ENCODE measurements at regions of chr14 and their contacts with region 1.

Region 1: DNA sequence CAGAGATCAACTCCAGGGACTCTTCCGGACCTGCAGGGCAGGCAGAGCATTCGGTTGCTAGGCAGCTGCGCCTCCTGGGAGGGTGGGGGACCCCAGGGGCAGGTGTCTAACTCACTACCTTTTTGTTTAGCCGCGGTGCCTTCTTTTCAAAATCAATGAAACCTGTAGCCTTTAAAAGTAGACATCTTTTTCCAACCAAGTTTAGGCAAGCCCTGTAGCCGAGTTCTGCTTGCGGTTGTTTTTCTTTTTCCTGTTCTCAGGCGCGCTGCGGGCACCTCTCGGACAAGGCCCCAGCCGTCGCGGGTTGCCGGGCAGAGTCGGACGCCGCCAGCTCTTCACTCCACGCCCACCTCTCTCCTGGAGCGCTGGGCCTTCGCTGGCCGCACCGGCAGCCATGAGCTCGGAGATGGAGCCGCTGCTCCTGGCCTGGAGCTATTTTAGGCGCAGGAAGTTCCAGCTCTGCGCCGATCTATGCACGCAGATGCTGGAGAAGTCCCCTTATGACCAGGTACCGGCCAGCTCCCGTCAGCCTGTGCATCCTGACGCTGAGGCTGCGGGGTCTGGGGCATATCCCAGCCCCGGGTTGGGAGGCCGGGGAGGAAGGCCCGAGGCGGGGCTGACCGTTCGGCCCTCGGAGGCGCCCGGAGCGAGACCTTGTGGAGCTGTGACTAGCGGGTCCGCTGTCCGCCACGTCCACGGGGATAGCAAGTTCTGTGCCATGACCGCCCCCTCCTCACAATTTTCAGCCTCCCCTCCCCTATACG is at the start of gene TTC8:
- DNase-seq: peak; percentile 79 to 91
- ATAC-seq: peak; percentile 96 to 98 (median 96)
- H3K4me3 ChIP-seq: peak within 1 kb of the TSS; percentile 67
- H3K4me3 Mint-ChIP-seq: peak within 1 kb of the TSS; percentile 87
- H3K27ac ChIP-seq: peak within 1 kb of the TSS; percentile 85
- H3K27ac Mint-ChIP-seq: peak within 1 kb of the TSS; percentile 92 to 94
- H3K4me1 ChIP-seq: peaks cover 8% of the 10 kb centered on the region
- H3K4me1 Mint-ChIP-seq: peaks cover 0 to 13% of the 10 kb centered on the region in 2 donors
- H3K27me3 ChIP-seq: no peaks in the 10 kb centered on the region
- H3K27me3 Mint-ChIP-seq: peaks cover 16 to 39% of the 10 kb centered on the region in 2 donors
- CTCF ChIP-seq: no peak
- total RNA-seq, gene TTC8: 1.3 to 2.4 (median 1.9) TPM

Region 2: DNA sequence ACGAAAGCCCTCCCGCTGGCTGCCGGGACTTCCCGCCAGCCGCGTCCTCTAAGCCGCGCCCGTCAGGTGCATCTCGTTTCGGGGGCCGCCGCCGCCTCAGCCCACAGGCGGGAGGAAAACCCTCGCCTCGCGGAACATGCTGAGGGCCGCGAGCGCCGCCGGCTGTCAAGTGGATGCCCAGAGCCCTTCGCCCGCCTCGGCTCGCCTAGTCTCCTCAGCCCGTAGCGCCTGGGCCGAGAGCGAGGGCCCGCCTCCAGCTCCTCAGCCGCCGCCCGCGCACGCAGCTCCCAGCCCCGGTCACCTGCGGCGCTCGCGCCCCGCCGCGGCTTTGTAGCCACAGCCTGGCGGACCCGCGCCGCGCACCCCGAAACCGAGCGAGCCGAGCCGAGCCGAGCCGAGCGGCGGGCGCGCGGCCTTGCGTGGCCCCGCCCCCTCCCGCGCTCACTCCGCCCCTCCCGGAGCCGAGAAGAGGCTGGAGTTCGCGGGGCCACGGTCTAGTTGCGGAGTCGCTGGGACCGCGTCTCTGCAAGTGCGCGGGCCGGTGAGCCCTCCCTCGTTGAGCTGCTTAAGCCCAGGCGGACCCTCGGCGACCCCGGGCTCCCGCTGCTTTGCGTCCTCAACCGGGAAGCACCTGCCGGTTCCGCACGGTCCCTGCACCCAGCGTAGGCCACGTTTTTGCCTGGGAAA is 31.8 kb before region 1 on chr14 and contains the start of gene EML5:
- intact Hi-C with region 1: loop called (anchors 1 kb)
- DNase-seq: peak; percentile 74 to 90
- ATAC-seq: peak; percentile 86 to 94 (median 89)
- H3K4me3 ChIP-seq: peak within 1 kb of the TSS; percentile 75
- H3K4me3 Mint-ChIP-seq: peak within 1 kb of the TSS; percentile 92
- H3K27ac ChIP-seq: peak within 1 kb of the TSS; percentile 61
- H3K27ac Mint-ChIP-seq: peak within 1 kb of the TSS; percentile 60 to 76
- H3K4me1 ChIP-seq: peaks cover 14% of the 10 kb centered on the region
- H3K4me1 Mint-ChIP-seq: peaks cover 0 to 12% of the 10 kb centered on the region in 2 donors
- H3K27me3 ChIP-seq: peaks cover 12% of the 10 kb centered on the region
- H3K27me3 Mint-ChIP-seq: peaks cover 13% of the 10 kb centered on the region in 2 donors
- CTCF ChIP-seq: no peak
- total RNA-seq, gene EML5: 0.68 to 1.3 (median 1.0) TPM

Region 3: GRCh38 chr14:88808359-88808758 is 16.1 kb before region 1 on chr14:
- intact Hi-C with region 1: no loop called
- DNase-seq: no peak
- ATAC-seq: no peak
- H3K4me3 ChIP-seq: no peak overlapping the region
- H3K4me3 Mint-ChIP-seq: no peak overlapping the region
- H3K27ac ChIP-seq: no peak overlapping the region
- H3K27ac Mint-ChIP-seq: no peak overlapping the region
- H3K4me1 ChIP-seq: no peaks in the 10 kb centered on the region
- H3K4me1 Mint-ChIP-seq: no peaks in the 10 kb centered on the region
- H3K27me3 ChIP-seq: peaks cover 10% of the 10 kb centered on the region
- H3K27me3 Mint-ChIP-seq: peaks cover 20 to 64% of the 10 kb centered on the region in 2 donors
- CTCF ChIP-seq: no peak

Measured in natural killer cell (primary cell).